Pancreas (tissue), 10 donors: ENCODE measurements at regions of chr1 and their contacts with region 1.

Region 1: GRCh38 chr1:181424786-181425403 is 58.4 kb upstream of the CACNA1E start:
- DNase-seq: peak; percentile 43 to 86 (median 76)
- ATAC-seq: peak; percentile 60 to 86 (median 82)
- H3K4me3 ChIP-seq: no peak overlapping the region
- H3K27ac ChIP-seq: no peak overlapping the region
- H3K4me1 ChIP-seq: no peaks in the 10 kb centered on the region
- H3K27me3 ChIP-seq: no peaks in the 10 kb centered on the region
- CTCF ChIP-seq: peak; percentile 97 to 99 (median 98)

Region 2: GRCh38 chr1:181189691-181190363 is 235.1 kb before region 1 on chr1:
- intact Hi-C with region 1: loop called (anchors 2 to 10 kb)
- DNase-seq: peak in 5 of 6 donors; percentile 41 to 97 (median 82)
- ATAC-seq: peak; percentile 93 to 98 (median 96)
- H3K4me3 ChIP-seq: peak overlapping the region in 1 of 4 donors; percentile 35
- H3K27ac ChIP-seq: no peak overlapping the region
- H3K4me1 ChIP-seq: no peaks in the 10 kb centered on the region
- H3K27me3 ChIP-seq: no peaks in the 10 kb centered on the region
- CTCF ChIP-seq: peak; percentile 97 to 99 (median 98)